Left ventricle myocardium superior (tissue), 1 donor: ENCODE measurements at regions of chr1 and their contacts with region 1.

Region 1: GRCh38 chr1:164786980-164787833 is 228.2 kb downstream of the PBX1 start:
- DNase-seq: peak; percentile 87
- ATAC-seq: peak; percentile 85

Region 2: DNA sequence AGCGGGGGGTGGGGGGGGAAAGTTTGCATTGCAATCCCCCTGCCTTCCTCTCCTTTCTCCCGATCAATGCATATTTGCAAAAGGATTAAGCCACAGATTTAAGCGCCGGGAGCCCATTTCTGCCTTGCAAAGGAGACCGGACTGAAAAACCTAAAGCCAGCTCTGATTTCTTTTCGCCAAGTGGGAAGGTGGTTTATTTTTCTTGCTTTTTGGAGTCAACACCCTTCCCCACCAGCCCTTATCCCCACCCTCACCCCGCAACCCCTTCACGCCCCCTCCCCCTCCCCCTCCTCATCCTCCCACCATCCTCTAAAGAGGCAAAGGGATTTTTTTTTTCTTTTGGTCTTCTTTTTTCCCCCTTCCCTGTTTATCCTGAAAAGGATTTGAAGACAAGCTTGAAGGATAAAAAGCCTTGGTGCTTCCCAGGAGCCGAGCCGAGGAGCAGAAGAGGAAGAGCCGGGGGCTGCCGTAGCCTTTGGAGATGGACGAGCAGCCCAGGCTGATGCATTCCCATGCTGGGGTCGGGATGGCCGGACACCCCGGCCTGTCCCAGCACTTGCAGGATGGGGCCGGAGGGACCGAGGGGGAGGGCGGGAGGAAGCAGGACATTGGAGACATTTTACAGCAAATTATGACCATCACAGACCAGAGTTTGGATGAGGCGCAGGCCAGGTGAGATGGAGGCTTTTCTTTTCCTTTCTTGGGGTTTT is 227.7 kb before region 1 on chr1:
- intact Hi-C with region 1: loop called (anchors 10 kb)
- DNase-seq: peak; percentile 62
- ATAC-seq: peak; percentile 42

Region 3: DNA sequence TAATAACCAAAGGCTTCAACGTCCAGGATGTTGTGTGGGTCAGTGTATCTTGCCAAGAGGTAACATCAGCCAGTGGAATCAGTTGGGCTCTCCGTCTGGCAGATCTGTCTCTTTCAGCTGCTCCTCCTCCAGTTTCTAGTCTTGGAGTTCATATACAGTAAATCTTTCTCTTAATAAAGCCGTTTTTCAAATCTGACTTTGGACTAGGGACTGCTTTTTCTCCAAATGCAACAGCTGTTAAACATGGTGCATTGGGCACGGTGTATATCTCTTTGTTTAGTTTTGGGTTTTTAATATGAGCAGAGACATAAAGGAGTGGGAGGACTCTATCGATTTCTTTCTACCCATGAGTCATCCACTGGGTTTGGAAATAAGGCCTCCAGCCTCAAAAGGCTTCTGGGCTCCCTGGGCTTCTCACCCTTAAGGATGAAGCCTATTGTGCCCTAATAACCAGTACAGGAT is 142.4 kb before region 1 on chr1:
- intact Hi-C with region 1: loop called (anchors 10 kb)
- DNase-seq: no peak
- ATAC-seq: no peak

Region 4: DNA sequence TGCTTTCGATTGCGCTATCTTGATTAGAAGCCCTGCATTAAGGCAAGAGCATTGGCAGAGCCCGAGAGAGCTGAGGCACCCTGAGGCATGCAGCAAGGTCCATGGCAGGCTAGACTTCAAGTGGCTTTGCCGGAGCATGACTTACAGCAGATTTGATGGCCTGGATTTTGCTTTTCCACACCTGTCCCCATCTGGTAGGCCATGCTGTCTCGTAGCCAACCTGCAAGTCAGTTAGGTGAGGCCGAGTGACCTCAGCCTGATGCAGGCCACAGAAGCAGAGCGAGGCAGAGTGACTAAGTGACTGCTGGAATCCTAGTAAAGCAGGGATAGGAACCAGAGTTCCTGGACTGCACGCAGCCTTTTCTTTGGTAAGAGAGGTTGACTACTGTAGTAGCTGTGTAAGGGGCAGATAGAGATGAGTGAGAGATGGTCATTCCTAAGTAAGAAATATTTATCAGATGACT is 79.3 kb before region 1 on chr1:
- intact Hi-C with region 1: loop called (anchors 10 kb)
- DNase-seq: peak; percentile 51
- ATAC-seq: peak; percentile 62